Left ventricle myocardium inferior (tissue), 1 donor: ENCODE measurements at regions of chr12 and their contacts with region 1.

Region 1: DNA sequence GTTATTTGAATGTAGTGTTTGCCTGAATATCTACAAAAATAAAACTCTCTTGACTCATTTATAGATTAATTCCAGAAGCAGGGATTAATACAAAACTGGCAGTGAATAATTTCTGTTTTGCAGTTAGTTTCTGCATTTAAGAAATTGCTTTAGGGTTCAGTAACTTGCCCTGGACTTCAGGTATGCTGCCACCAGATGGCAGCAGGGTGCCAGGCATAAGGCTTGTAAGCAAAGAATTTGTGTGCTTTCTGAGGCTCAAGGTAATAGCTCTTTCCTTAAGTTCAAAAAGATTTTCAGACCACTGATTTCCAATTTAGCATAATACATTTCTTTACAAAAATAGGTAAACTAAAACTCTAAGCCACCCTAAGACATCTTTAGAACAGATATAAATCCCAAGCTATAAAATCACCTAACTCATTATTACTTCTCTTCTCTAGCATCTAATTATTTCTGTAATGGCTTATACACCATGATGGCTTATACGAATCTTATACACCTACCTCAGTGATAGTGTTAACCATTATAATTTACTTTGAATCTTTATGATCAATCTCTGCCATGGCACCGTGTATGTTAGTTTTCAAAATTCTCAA is 398.3 kb downstream of the APAF1 start:
- DNase-seq: peak; percentile 53
- H3K4me3 ChIP-seq: no peak overlapping the region
- H3K27ac ChIP-seq: no peak overlapping the region
- H3K4me1 ChIP-seq: no peaks in the 10 kb centered on the region
- H3K27me3 ChIP-seq: peaks cover 13% of the 10 kb centered on the region
- CTCF ChIP-seq: peak; percentile 87

Region 2: DNA sequence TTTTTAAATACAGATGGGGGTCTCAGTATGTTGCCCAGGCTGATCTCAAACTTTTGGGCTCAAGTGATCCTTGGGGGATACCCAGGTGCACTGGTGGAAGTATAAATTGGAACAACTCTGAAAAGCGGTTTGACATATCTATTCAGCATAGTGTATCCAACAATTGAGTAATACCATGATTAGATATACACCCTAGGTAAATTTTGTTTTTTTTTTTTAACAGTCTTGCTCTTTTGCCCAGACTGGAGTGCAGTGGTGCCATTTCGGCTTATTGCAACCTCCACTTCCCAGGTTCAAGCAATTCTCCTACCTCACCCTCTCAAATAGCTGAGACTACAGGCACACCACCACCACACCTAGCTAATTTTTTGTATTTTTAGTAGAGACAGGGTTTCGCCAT is 481.6 kb before region 1 on chr12:
- intact Hi-C with region 1: no loop called
- DNase-seq: no peak
- H3K4me3 ChIP-seq: no peak overlapping the region
- H3K27ac ChIP-seq: no peak overlapping the region
- H3K4me1 ChIP-seq: peaks cover 2% of the 10 kb centered on the region
- H3K27me3 ChIP-seq: no peaks in the 10 kb centered on the region
- CTCF ChIP-seq: no peak

Region 3: DNA sequence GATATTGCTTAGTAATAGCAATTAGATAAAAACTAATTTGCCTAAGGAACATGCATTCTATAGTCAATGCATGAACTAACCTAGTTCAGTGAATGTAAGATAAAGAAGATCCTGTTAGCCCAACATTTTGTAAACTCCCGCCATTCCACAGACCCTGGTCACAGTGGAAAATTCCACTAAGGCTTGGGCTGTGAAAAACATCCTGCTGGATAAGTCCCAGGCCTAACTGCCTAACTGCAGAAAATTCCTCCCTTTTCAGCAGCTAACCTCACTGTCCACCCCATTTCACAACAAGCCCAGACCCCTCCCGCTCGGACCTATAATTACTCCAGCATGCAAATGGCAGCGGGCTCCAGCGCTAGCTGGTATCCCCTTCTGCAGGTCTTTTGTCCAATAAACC is 506.2 kb after region 1 on chr12:
- intact Hi-C with region 1: no loop called
- DNase-seq: no peak
- H3K4me3 ChIP-seq: no peak overlapping the region
- H3K27ac ChIP-seq: no peak overlapping the region
- H3K4me1 ChIP-seq: no peaks in the 10 kb centered on the region
- H3K27me3 ChIP-seq: no peaks in the 10 kb centered on the region
- CTCF ChIP-seq: no peak

Region 4: DNA sequence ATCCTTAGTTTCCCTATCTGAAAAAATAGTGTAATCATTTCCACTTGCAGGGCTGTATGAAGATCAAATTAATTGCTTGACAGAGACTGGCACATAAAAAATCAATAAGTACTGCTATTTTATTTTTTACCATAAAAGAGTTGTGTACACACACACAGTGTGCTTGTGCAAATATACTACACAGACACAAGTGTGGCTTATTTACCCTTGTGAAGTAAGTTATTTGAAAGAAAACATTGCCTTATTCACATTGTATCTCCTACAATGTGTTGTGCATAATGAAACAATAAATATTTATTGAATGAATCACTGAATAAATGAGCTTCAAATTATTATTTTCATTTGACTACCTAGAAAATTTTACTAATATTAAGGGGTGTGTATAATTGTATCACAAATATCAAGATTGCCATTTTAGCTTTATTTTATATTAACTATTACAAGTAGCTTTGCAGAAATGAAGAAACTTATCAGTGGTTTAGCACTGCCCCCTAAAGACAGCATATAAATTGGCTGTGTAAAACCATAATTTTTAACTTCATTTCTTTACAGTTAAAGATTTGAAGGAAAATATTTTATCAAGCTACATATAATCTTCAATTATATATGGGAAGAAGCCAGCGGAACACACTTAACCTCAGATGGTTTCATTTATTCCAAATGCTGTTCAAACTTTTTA is 615.4 kb after region 1 on chr12:
- intact Hi-C with region 1: loop called (anchors 10 kb)
- DNase-seq: no peak
- H3K4me3 ChIP-seq: no peak overlapping the region
- H3K27ac ChIP-seq: no peak overlapping the region
- H3K4me1 ChIP-seq: no peaks in the 10 kb centered on the region
- H3K27me3 ChIP-seq: no peaks in the 10 kb centered on the region
- CTCF ChIP-seq: no peak

Region 5: DNA sequence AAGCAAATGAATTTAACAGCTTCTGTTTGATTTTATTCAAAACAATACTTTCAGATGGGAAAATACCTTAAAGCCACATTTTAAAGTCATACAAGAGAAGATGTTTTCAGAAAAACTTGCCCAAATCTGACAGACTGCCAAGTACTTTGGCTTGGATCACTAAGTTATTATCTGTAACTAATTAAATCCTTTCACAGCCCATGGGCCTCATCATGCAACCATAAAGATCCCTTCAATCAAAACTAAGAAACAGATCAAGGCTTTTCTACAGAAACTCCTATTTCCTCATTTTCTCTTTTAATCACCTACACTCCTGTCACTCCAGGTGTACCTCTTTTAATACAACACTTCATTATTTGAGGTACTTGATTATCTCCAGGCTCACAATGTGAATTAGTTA is 1071.2 kb after region 1 on chr12:
- intact Hi-C with region 1: no loop called
- DNase-seq: no peak
- H3K4me3 ChIP-seq: no peak overlapping the region
- H3K27ac ChIP-seq: no peak overlapping the region
- H3K4me1 ChIP-seq: peaks cover 15% of the 10 kb centered on the region
- H3K27me3 ChIP-seq: no peaks in the 10 kb centered on the region
- CTCF ChIP-seq: no peak